GM12878 (cell line): ENCODE measurements at regions of chr15 and their contacts with region 1.

Region 1: GRCh38 chr15:92077353-92078085 is 224.0 kb downstream of the SLCO3A1 start:
- DNase-seq: no peak
- ATAC-seq: peak; percentile 92
- H3K4me3 ChIP-seq: no peak overlapping the region
- H3K27ac ChIP-seq: no peak overlapping the region
- H3K4me1 ChIP-seq: no peaks in the 10 kb centered on the region
- H3K27me3 ChIP-seq: no peaks in the 10 kb centered on the region
- CTCF ChIP-seq: peak; percentile 75 to 91 (median 82); a peak in 5 of 6 replicates
- EP300 ChIP-seq: no peak
- POLR2A ChIP-seq: no peak
- RAD21 ChIP-seq: peak; percentile 82

Region 2: DNA sequence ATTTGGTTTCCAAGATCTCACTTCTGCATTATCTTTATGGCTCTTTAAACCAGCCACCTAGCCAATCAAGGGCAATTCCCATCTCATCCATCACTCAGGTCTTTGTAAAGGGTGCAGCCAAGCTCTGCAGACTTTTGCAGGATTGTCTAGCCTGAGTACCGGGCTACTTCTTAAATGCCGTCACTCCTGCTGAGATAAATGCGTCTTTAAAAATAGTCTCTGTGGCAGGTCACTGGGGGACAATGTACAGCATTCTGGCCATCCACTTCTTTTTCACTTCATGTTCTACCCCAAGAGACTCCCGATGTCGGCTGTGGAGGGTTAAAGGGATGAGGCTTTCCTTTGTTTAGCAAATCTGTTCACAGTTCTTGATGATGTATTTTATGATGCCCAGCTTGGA is 782.7 kb before region 1 on chr15:
- CTCF ChIA-PET with region 1: interaction called, 16 read pairs
- POLR2A ChIA-PET with region 1: no interaction called
- RAD21 ChIA-PET with region 1: no interaction called
- SMC1A ChIA-PET with region 1: interaction called, 3 read pairs
- in situ Hi-C with region 1: loop called (anchors 5 kb)
- intact Hi-C with region 1: no loop called
- DNase-seq: no peak
- ATAC-seq: no peak
- H3K4me3 ChIP-seq: no peak overlapping the region
- H3K27ac ChIP-seq: no peak overlapping the region
- H3K4me1 ChIP-seq: no peaks in the 10 kb centered on the region
- H3K27me3 ChIP-seq: no peaks in the 10 kb centered on the region
- CTCF ChIP-seq: no peak
- EP300 ChIP-seq: no peak
- POLR2A ChIP-seq: no peak
- RAD21 ChIP-seq: no peak

Region 3: GRCh38 chr15:91302588-91303439 is 774.7 kb before region 1 on chr15:
- CTCF ChIA-PET with region 1: interaction called, 16 read pairs
- POLR2A ChIA-PET with region 1: no interaction called
- RAD21 ChIA-PET with region 1: interaction called, 5 read pairs
- SMC1A ChIA-PET with region 1: interaction called, 5 read pairs
- in situ Hi-C with region 1: loop called (anchors 5 kb)
- intact Hi-C with region 1: loop called (anchors 1 kb)
- DNase-seq: peak; percentile 17
- ATAC-seq: peak; percentile 78
- H3K4me3 ChIP-seq: no peak overlapping the region
- H3K27ac ChIP-seq: no peak overlapping the region
- H3K4me1 ChIP-seq: no peaks in the 10 kb centered on the region
- H3K27me3 ChIP-seq: peaks cover 0 to 3% of the 10 kb centered on the region in 2 experiments; a peak in 1 of 4 replicates
- CTCF ChIP-seq: peak; percentile 67 to 78 (median 70)
- EP300 ChIP-seq: no peak
- POLR2A ChIP-seq: no peak
- RAD21 ChIP-seq: peak; percentile 86

Region 4: GRCh38 chr15:91706322-91707032 is 371.0 kb before region 1 on chr15:
- CTCF ChIA-PET with region 1: interaction called, 30 read pairs
- POLR2A ChIA-PET with region 1: no interaction called
- RAD21 ChIA-PET with region 1: interaction called, 4 read pairs
- SMC1A ChIA-PET with region 1: interaction called, 13 read pairs
- in situ Hi-C with region 1: loop called (anchors 5 kb)
- intact Hi-C with region 1: loop called (anchors 1 kb)
- DNase-seq: peak; percentile 3
- ATAC-seq: peak; percentile 83
- H3K4me3 ChIP-seq: no peak overlapping the region
- H3K27ac ChIP-seq: no peak overlapping the region
- H3K4me1 ChIP-seq: no peaks in the 10 kb centered on the region
- H3K27me3 ChIP-seq: no peaks in the 10 kb centered on the region; a peak in 1 of 4 replicates
- CTCF ChIP-seq: peak; percentile 64 to 90 (median 70)
- EP300 ChIP-seq: no peak
- POLR2A ChIP-seq: no peak
- RAD21 ChIP-seq: peak; percentile 45

Region 5: DNA sequence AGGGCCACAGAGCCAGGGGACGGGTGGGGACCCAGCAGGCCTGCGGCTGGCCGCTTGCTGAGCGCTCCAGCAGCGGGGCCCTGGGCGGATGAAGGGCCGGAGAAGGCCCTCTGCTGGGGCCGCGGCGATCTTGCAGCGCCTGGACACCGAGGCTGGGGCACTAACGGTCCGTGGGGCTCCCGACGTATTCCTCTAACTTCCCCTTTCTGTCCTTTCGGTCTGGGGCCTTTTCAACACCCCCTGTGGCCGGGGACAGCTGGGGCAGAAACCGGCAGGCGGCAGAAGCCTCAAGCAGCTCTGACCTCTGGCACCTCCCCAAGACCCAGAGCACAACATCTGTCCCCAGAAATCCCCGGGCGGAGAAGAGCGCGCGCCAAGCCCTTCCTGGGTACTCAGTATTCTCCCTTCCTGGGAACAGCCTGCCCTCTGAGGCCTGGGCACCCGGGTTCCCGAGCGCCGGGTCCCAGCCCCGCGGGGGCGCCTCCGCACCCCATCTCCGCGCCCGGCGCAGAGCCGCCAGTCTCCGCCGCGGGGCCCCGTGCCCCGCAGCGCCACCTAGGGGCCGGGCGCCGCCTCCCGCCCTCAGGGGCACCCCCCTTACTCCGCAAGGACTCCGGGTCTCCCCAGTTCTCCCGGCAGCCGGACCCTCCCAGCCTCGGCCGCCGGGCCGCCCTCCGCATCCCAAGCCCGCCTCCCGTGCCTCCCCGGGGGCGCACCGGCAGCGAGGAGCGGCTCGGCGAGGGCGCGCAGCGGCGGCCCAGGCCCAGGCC is 224.6 kb before region 1 on chr15:
- CTCF ChIA-PET with region 1: interaction called, 17 read pairs
- POLR2A ChIA-PET with region 1: no interaction called
- RAD21 ChIA-PET with region 1: interaction called, 3 read pairs
- SMC1A ChIA-PET with region 1: no interaction called
- in situ Hi-C with region 1: no loop called
- intact Hi-C with region 1: loop called (anchors 1 kb)
- DNase-seq: no peak
- ATAC-seq: peak; percentile 65
- H3K4me3 ChIP-seq: 0 out of 2 replicates have a peak overlapping the region, but pooled peaks have one; percentile 11
- H3K27ac ChIP-seq: no peak overlapping the region
- H3K4me1 ChIP-seq: peaks cover 8% of the 10 kb centered on the region
- H3K27me3 ChIP-seq: peaks cover 0 to 13% of the 10 kb centered on the region in 2 experiments; a peak in 2 of 4 replicates
- CTCF ChIP-seq: peak; percentile 56 to 68 (median 63)
- EP300 ChIP-seq: 0 out of 4 replicates have a peak, but pooled peaks of 1 of the 2 experiments have one; percentile 6
- POLR2A ChIP-seq: no peak
- RAD21 ChIP-seq: no peak

Region 6: DNA sequence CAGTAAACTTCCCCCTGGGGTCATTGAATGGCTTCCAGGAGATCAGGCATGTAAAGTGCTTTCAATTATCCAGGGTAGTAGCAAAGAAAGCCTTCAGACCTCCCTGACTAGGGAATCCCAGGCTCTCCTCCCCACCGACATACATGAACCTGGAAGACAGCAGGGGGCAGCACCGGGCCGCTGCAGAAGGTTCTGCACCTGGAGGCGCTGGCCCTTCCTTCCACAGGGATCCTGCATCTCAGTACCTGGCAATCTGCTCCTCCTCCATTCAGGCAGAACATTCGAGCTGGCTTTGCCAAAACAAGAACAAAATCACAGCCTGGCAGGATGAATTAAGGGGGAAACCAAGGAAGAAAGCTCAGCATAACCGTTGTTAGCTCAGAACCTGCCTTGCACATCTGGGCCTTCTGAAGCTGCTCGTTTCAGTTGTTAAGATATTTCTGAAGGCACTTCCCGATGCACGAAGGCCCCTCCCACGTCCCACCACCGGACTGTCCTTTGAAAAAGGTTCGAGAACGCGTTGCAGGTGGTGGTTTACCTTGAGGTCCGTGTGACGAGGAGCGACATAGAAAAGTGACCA is 13.7 kb after region 1 on chr15:
- CTCF ChIA-PET with region 1: interaction called, 19 read pairs
- POLR2A ChIA-PET with region 1: no interaction called
- RAD21 ChIA-PET with region 1: no interaction called
- SMC1A ChIA-PET with region 1: interaction called, 3 read pairs
- in situ Hi-C with region 1: no loop called
- intact Hi-C with region 1: no loop called
- DNase-seq: no peak
- ATAC-seq: peak; percentile 34; the same call in 1 of the 3 replicates
- H3K4me3 ChIP-seq: no peak overlapping the region
- H3K27ac ChIP-seq: no peak overlapping the region
- H3K4me1 ChIP-seq: peaks cover 4% of the 10 kb centered on the region
- H3K27me3 ChIP-seq: no peaks in the 10 kb centered on the region
- CTCF ChIP-seq: peak; percentile 47 to 71 (median 51); a peak in 5 of 6 replicates
- EP300 ChIP-seq: no peak
- POLR2A ChIP-seq: no peak
- RAD21 ChIP-seq: peak; percentile 37

Region 7: DNA sequence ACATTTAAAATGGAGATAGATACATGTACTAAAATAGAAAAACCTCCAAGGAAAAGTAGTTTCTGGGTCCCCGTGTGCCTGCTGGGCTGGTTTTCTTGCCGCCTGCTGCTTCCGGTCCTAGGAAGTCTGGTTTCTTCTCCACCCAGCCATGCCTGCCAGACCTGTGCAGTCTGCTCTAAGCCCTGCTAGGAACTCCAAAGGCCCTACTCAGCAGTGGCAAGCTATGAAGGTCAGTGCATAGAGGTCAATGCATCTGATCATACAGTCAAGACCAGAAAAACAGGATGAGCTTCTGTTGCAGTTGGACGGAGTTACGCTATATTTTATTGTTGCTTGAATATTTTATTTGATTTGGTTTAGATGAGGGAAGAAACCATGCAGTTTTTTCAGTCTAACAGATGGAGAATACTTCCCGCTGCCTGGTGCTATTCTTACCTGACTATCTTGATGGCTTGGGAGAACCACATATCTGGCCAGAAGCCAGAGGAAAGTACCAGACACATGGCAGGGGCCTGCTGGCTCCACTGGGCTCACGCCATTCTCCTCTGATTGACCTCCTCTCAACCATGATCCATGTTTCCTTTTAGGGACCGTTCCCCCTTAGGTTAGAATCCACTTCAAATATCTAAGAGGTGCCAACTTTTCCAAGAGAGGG is 89.4 kb after region 1 on chr15:
- CTCF ChIA-PET with region 1: no interaction called
- POLR2A ChIA-PET with region 1: no interaction called
- RAD21 ChIA-PET with region 1: no interaction called
- SMC1A ChIA-PET with region 1: no interaction called
- in situ Hi-C with region 1: no loop called
- intact Hi-C with region 1: no loop called
- DNase-seq: no peak
- ATAC-seq: no peak
- H3K4me3 ChIP-seq: no peak overlapping the region
- H3K27ac ChIP-seq: no peak overlapping the region
- H3K4me1 ChIP-seq: peaks cover under 1% of the 10 kb centered on the region; the same call in 1 of the 2 replicates
- H3K27me3 ChIP-seq: no peaks in the 10 kb centered on the region
- CTCF ChIP-seq: no peak
- EP300 ChIP-seq: no peak
- POLR2A ChIP-seq: no peak
- RAD21 ChIP-seq: no peak